Activated CD8-positive, alpha-beta T cell treated with anti-CD3 and anti-CD28 coated beads for 36 hours (primary cell): ENCODE measurements at regions of chr1 and their contacts with region 1.

Region 1: GRCh38 chr1:15323351-15323988 is 76.4 kb downstream of the FHAD1 start:
- DNase-seq: peak; percentile 85
- ATAC-seq: peak; percentile 94
- H3K4me3 Mint-ChIP-seq: no peak overlapping the region
- H3K27ac Mint-ChIP-seq: no peak overlapping the region
- H3K4me1 Mint-ChIP-seq: peaks cover 4% of the 10 kb centered on the region
- H3K27me3 Mint-ChIP-seq: peaks cover 4% of the 10 kb centered on the region
- CTCF ChIP-seq: peak; percentile 89

Region 2: DNA sequence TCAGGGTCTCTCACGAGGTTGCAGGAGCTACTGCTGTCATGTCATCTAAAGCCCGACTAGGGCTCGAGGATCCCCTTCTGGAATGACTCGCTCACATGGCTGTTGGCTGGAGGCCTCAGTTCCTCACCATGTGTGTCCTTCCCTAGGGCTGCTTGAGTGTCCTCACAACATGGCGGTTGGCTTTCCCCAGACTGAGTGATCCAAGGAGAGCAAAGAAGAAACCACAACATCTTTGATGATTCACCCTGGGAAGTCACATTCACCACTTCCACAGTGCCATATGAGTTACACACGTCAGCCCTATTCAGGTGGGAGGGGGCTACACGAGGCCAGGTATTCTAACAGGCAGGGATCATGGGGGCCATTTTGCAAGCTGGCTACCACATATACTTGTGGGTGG is 11.6 kb before region 1 on chr1:
- CTCF ChIA-PET with region 1: interaction called, 10 read pairs
- POLR2A ChIA-PET with region 1: no interaction called
- intact Hi-C with region 1: no loop called
- DNase-seq: no peak
- ATAC-seq: no peak
- H3K4me3 Mint-ChIP-seq: no peak overlapping the region
- H3K27ac Mint-ChIP-seq: no peak overlapping the region
- H3K4me1 Mint-ChIP-seq: no peaks in the 10 kb centered on the region
- H3K27me3 Mint-ChIP-seq: peaks cover 3% of the 10 kb centered on the region
- CTCF ChIP-seq: no peak

Region 3: DNA sequence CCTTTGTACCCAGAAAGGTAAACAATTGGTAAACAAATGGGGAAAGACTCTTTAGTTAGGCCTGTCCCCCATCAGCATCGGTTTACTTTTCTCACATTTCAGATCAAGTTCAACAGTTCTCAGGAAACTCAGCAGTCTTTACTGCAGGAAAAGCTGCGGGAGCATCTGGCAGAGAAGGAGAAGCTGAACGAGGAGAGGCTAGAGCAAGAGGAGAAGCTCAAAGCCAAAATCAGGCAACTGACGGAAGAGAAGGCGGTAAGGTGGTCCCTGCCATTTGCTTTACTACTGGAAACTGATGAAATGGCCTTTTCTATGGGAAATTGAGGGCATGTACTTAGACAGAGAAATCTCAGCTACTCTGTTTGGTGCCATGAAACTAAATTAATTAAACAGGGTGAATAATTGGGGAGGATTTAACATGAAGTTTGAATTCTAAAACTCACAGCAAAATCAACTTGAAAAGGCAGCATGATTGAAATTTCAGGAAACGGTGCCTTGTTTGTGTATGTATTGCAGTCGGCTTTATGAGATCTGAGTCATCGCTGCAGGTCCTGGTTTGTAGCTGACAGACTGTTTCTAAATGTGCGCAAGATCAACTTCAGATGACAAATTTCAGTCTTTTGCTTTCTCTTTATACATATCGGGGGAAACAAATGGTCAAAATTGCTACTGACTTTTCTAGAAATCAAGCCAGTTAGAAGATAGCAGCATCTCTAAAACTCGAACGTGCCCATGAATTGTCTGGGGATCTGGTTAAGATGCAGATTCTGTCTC is 18.4 kb after region 1 on chr1:
- CTCF ChIA-PET with region 1: interaction called, 17 read pairs
- POLR2A ChIA-PET with region 1: interaction called, 5 read pairs
- intact Hi-C with region 1: no loop called
- DNase-seq: no peak
- ATAC-seq: peak; percentile 35
- H3K4me3 Mint-ChIP-seq: no peak overlapping the region
- H3K27ac Mint-ChIP-seq: peak overlapping the region; percentile 43
- H3K4me1 Mint-ChIP-seq: peaks cover 37% of the 10 kb centered on the region
- H3K27me3 Mint-ChIP-seq: peaks cover 26% of the 10 kb centered on the region
- CTCF ChIP-seq: no peak

Region 4: DNA sequence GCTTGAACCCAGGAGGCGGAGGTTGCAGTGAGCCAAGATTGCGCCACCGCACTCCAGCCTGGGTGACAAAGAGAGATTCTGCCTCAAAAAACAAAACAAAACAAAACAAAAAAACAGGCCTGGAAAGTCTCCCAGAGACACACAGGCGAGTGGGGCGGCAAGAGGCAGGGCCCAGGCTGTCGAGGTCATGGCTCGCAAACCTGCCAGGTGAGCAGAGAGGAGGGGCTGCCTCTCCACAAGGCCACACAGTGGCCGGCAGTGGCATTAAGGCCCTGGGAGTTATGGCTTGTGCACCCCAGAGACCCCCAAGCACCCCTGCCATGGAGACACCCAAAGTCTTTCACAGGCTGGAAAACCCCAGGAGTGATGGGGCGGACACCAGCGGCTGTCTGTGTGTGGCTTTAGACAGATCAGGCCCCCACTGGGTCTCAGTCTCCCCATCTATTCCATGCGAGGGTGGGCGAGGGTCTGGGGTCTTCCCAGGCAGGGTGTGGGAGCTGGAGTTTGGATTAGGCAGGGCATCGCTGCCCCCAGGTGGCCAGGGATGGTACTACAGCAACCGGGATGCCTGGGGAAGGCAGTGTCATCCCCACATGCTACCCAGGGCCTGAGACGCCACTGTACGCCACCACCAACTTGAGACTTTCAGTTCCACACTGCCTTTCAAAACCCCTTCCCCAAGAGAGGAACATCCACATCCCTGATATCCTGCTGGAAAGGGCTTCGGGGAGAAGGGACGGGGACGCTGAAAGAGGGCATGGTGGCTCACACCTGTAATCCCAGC is 107.5 kb after region 1 on chr1:
- CTCF ChIA-PET with region 1: interaction called, 108 read pairs
- POLR2A ChIA-PET with region 1: interaction called, 6 read pairs
- intact Hi-C with region 1: loop called (anchors 1 kb)
- DNase-seq: peak; percentile 82
- ATAC-seq: peak; percentile 93
- H3K4me3 Mint-ChIP-seq: no peak overlapping the region
- H3K27ac Mint-ChIP-seq: no peak overlapping the region
- H3K4me1 Mint-ChIP-seq: peaks cover 7% of the 10 kb centered on the region
- H3K27me3 Mint-ChIP-seq: no peaks in the 10 kb centered on the region
- CTCF ChIP-seq: peak; percentile 99

Region 5: DNA sequence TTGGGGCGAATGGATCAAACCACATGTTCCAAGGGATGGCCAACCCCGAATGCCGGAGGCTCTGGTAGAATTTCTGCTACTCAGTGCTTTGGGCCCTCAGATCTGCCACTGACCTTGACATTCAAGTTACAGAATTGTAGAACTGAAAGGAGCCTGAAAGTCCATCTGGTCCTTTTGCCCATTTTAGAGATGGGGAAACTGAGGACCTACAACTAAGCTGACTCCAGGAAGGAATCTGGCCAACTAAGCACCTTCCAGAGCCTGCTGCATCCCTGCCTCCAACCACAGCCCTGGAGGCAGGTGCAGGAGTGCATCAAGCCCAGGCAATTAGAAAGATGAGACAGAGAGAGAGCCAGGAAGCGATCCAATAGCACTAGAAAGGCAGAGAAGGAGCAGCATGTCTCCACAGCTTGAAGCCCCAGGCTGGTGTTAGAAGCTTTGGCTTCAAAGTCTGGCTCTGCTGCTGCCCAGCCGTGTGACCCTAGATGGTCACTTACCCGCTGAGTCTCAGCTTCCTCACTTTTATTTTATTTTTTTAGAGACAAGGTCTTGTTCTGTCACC is 113.5 kb after region 1 on chr1:
- CTCF ChIA-PET with region 1: interaction called, 108 read pairs
- POLR2A ChIA-PET with region 1: interaction called, 6 read pairs
- intact Hi-C with region 1: no loop called
- DNase-seq: no peak
- ATAC-seq: no peak
- H3K4me3 Mint-ChIP-seq: no peak overlapping the region
- H3K27ac Mint-ChIP-seq: no peak overlapping the region
- H3K4me1 Mint-ChIP-seq: no peaks in the 10 kb centered on the region
- H3K27me3 Mint-ChIP-seq: no peaks in the 10 kb centered on the region
- CTCF ChIP-seq: no peak